GM10248 (cell line): ENCODE measurements at regions of chr6 and their contacts with region 1.

Region 1: DNA sequence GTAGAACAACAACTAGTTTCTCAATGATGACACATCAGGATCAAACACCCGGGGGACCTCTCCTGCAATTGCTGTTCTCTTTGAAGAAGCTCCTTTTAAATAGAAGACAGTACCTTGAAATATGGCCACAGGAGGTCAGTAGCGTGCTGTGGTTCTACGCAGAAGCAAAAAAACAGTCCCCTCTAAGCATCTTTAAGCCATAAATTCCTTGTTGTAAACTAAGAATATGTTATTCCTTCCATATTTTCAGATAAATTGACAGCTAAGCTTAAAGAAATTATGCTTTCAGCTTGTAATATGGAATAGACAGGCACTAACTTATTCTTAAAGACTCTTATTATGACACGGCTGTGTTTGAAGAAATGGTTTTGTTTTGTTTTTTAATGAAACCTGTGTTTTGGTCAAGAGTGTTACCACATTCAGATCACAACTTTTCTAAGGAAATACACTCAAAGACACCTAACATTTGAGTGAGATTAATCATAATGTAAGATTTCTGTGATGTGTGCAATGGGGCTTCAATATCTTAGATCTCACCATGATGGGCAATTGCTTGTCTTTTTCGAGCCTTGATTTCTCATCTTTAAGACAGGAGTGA is 49.7 kb upstream of the IL20RA start:
- DNase-seq: peak; percentile 43
- CTCF ChIP-seq: peak; percentile 66

Region 2: GRCh38 chr6:136967876-136968752 is 126.4 kb before region 1 on chr6:
- CTCF ChIA-PET with region 1: no interaction called
- POLR2A ChIA-PET with region 1: no interaction called
- DNase-seq: peak; percentile 83
- CTCF ChIP-seq: peak; percentile 81

Region 3: GRCh38 chr6:137076277-137077068 is 18.0 kb before region 1 on chr6:
- CTCF ChIA-PET with region 1: interaction called, 59 read pairs
- POLR2A ChIA-PET with region 1: no interaction called
- DNase-seq: peak; percentile 70
- CTCF ChIP-seq: peak; percentile 89

Region 4: DNA sequence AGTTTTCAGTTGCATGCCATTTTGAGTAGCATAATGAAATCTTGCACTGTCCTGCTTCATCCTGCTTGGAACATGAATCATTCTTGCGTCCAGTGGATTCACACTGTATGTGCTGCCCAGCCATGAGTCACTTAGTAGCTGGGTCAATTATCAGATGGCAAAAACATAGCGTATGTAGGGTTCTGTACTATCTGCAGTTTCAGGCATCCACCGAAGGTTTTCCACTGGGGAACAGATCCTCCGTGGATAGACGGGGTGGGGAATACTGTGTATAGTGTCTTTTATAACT is 17.5 kb after region 1 on chr6:
- CTCF ChIA-PET with region 1: interaction called, 38 read pairs
- POLR2A ChIA-PET with region 1: no interaction called
- DNase-seq: no peak
- CTCF ChIP-seq: no peak

Region 5: DNA sequence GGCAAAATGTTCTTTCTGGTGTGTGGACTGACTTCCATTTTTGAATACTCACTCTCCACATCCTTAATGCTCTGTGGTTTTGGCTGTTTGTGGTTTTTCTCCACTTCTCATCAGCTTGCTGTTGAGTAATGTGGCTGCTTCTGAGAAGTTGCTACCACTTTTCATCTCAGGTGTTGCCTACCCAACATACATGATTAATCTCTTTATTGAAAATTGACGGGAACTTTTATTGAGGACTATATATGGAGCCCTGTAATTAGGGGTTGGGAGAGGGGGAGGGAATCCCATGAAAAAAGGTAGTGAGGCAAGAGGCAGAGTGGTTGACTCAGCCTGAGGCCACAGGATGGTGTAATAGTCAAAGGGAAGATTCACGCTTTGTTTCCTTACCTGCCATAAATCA is 61.3 kb after region 1 on chr6:
- CTCF ChIA-PET with region 1: interaction called, 10 read pairs
- POLR2A ChIA-PET with region 1: no interaction called
- DNase-seq: peak; percentile 26
- CTCF ChIP-seq: no peak

Region 6: DNA sequence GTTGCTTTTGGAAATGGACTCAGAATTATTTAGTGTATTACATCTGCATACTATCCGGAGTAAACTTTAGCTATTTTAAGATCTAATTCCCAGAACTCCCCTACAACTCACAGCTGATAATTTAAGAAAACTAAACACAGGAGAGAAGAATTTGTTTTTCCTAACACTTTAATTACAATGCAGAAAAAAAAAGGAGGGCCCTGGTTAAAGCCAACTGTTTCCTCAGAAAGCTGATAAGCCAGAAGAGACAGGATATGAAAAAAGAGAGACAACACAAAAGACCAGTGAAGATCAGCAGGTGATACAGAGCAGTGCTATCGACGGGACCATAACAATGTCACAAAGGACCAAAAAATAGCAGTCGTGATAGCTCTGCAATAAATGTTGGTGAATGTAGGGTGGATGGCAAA is 118.8 kb after region 1 on chr6:
- CTCF ChIA-PET with region 1: interaction called, 10 read pairs
- POLR2A ChIA-PET with region 1: no interaction called
- DNase-seq: no peak
- CTCF ChIP-seq: no peak

Region 7: GRCh38 chr6:137223370-137224131 is 129.0 kb after region 1 on chr6:
- CTCF ChIA-PET with region 1: interaction called, 19 read pairs
- POLR2A ChIA-PET with region 1: no interaction called
- DNase-seq: no peak
- CTCF ChIP-seq: no peak